Calu3 (cell line): ENCODE measurements at regions of chr7 and their contacts with region 1.

Region 1: GRCh38 chr7:155796381-155797261 is 15.6 kb downstream of the SHH start:
- DNase-seq: peak; percentile 87
- H3K4me3 Mint-ChIP-seq: no peak overlapping the region
- H3K27ac Mint-ChIP-seq: no peak overlapping the region
- H3K4me1 Mint-ChIP-seq: no peaks in the 10 kb centered on the region
- H3K27me3 Mint-ChIP-seq: no peaks in the 10 kb centered on the region
- CTCF ChIP-seq: peak; percentile 96

Region 2: GRCh38 chr7:155439311-155440017 is 357.2 kb before region 1 on chr7:
- CTCF ChIA-PET with region 1: no interaction called
- intact Hi-C with region 1: no loop called
- DNase-seq: no peak
- H3K4me3 Mint-ChIP-seq: no peak overlapping the region
- H3K27ac Mint-ChIP-seq: no peak overlapping the region
- H3K4me1 Mint-ChIP-seq: peaks cover 8% of the 10 kb centered on the region
- H3K27me3 Mint-ChIP-seq: peaks cover 100% of the 10 kb centered on the region
- CTCF ChIP-seq: no peak

Region 3: GRCh38 chr7:156386097-156386496 is 589.5 kb after region 1 on chr7:
- CTCF ChIA-PET with region 1: no interaction called
- intact Hi-C with region 1: loop called (anchors 10 kb)
- DNase-seq: no peak
- H3K4me3 Mint-ChIP-seq: no peak overlapping the region
- H3K27ac Mint-ChIP-seq: no peak overlapping the region
- H3K4me1 Mint-ChIP-seq: no peaks in the 10 kb centered on the region
- H3K27me3 Mint-ChIP-seq: peaks cover 39% of the 10 kb centered on the region
- CTCF ChIP-seq: no peak

Region 4: DNA sequence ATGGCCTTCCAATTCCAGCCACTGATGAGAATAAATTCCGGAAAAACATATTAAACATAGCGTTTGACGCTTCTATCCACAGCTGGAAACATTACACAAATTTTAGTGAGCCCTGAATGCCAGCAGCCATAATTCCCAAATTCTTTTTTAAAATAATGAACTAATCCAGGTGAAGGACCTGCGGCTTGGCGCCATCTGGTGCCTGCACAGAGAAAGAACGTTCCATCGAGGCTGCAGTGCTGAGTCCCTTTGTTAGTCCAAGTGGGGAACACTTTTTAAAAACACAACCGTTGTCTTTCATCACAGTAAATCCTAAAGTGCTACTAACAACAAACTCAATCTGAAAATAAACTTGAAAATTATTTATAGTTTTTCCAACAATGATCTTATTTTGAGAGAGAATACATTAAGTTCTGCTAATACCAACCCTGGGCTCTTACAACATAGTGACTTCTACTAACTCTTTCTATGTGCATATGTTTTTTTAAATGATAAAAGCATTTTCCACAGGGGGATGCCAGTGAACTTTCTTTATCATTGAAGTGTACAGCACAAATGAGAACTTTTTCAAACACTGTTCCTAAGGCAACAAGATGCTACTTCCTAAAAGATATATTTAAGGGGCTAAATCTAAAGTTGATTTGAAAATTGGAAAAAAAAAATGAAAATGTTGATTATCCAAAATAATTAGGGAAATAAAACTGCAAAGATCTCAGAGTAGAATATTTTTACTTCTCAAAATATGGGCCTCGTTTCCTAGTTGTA is 677.0 kb after region 1 on chr7:
- CTCF ChIA-PET with region 1: no interaction called
- intact Hi-C with region 1: loop called (anchors 1 kb)
- DNase-seq: peak; percentile 54
- H3K4me3 Mint-ChIP-seq: no peak overlapping the region
- H3K27ac Mint-ChIP-seq: no peak overlapping the region
- H3K4me1 Mint-ChIP-seq: no peaks in the 10 kb centered on the region
- H3K27me3 Mint-ChIP-seq: peaks cover 22% of the 10 kb centered on the region
- CTCF ChIP-seq: peak; percentile 71

Region 5: GRCh38 chr7:156827587-156828203 is 1031.1 kb after region 1 on chr7:
- CTCF ChIA-PET with region 1: no interaction called
- intact Hi-C with region 1: loop called (anchors 5 kb)
- DNase-seq: no peak
- H3K4me3 Mint-ChIP-seq: no peak overlapping the region
- H3K27ac Mint-ChIP-seq: no peak overlapping the region
- H3K4me1 Mint-ChIP-seq: no peaks in the 10 kb centered on the region
- H3K27me3 Mint-ChIP-seq: no peaks in the 10 kb centered on the region
- CTCF ChIP-seq: peak; percentile 30